ENCODE measurements at regions of chr1 and their contacts with region 1.

Region 1: DNA sequence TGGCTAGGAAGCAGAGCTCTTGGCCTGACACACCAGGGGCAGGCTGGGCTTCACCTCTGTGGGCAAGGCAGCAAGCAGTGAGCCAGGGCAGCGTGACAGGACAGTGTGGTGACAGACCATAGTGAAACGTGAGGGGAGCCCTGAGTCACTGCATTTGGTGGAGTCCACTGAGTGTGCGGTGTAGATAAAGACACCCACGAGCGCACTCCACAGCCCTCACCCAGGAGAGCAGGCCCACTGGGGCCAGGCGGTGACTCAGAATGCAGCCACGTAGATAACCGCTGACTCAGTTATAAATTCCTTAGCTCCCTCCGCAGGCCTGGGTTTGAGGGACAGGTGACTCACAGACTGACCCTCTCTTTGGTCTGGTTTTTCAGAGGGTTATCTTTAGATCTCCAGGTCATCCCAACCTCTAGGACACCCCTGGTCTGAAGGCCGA is 90.1 kb upstream of the TSPAN2 start:
- DNase-seq: no peak
- H3K4me3 ChIP-seq: no peak overlapping the region
- H3K27ac ChIP-seq: no peak overlapping the region
- H3K4me1 ChIP-seq: no peaks in the 10 kb centered on the region
- H3K27me3 ChIP-seq: no peaks in the 10 kb centered on the region
- CTCF ChIP-seq: no peak
- EP300 ChIP-seq: no peak
- POLR2A ChIP-seq: no peak
- RAD21 ChIP-seq: no peak

Region 2: GRCh38 chr1:115164484-115164883 is 14.9 kb before region 1 on chr1:
- CTCF ChIA-PET with region 1: interaction called, 12 read pairs
- POLR2A ChIA-PET with region 1: no interaction called
- DNase-seq: no peak
- H3K4me3 ChIP-seq: no peak overlapping the region
- H3K27ac ChIP-seq: no peak overlapping the region
- H3K4me1 ChIP-seq: no peaks in the 10 kb centered on the region
- H3K27me3 ChIP-seq: no peaks in the 10 kb centered on the region
- CTCF ChIP-seq: no peak
- EP300 ChIP-seq: no peak
- POLR2A ChIP-seq: no peak
- RAD21 ChIP-seq: no peak

Measured in H1 (cell line).